ENCODE measurements at regions of chr1 and their contacts with region 1.

Region 1: GRCh38 chr1:161792740-161793139 is 26.6 kb downstream of the ATF6 start:
- DNase-seq: no peak
- H3K4me3 Mint-ChIP-seq: no peak overlapping the region
- H3K27ac Mint-ChIP-seq: peak overlapping the region; percentile 50
- H3K4me1 Mint-ChIP-seq: peaks cover 4% of the 10 kb centered on the region
- H3K27me3 Mint-ChIP-seq: no peaks in the 10 kb centered on the region

Region 2: GRCh38 chr1:161631076-161631475 is 161.7 kb before region 1 on chr1 and contains the start of gene FCGR3B:
- CTCF ChIA-PET with region 1: no interaction called
- DNase-seq: no peak
- H3K4me3 Mint-ChIP-seq: no peak within 1 kb of the TSS
- H3K27ac Mint-ChIP-seq: no peak within 1 kb of the TSS
- H3K4me1 Mint-ChIP-seq: peaks cover 10% of the 10 kb centered on the region
- H3K27me3 Mint-ChIP-seq: no peaks in the 10 kb centered on the region

Region 3: GRCh38 chr1:161772397-161772796 is 20.3 kb before region 1 on chr1:
- CTCF ChIA-PET with region 1: interaction called, 10 read pairs
- DNase-seq: no peak
- H3K4me3 Mint-ChIP-seq: no peak overlapping the region
- H3K27ac Mint-ChIP-seq: no peak overlapping the region
- H3K4me1 Mint-ChIP-seq: peaks cover 26% of the 10 kb centered on the region
- H3K27me3 Mint-ChIP-seq: no peaks in the 10 kb centered on the region

Region 4: DNA sequence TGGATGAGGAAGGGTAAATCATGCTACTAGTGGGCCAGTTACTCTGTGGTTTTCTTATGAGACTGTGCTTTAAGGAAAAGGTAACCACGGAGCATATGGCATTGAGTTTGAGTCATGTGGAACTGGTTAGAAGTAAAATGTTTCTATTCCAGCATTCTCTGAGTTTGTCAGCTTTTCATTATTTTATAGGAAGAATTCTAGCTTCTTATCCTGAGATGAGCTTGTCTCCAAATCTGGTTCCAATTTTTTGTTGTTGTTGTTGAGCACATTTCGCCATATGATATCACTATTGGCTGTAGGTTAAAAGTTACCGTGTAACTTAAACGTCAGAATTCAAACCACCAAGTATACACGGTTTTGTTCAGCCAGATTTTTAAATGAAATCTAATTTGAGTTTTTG is 43.3 kb after region 1 on chr1:
- CTCF ChIA-PET with region 1: no interaction called
- DNase-seq: no peak
- H3K4me3 Mint-ChIP-seq: no peak overlapping the region
- H3K27ac Mint-ChIP-seq: no peak overlapping the region
- H3K4me1 Mint-ChIP-seq: peaks cover 7% of the 10 kb centered on the region
- H3K27me3 Mint-ChIP-seq: no peaks in the 10 kb centered on the region

Region 5: GRCh38 chr1:161994175-161994668 is 201.5 kb after region 1 on chr1:
- CTCF ChIA-PET with region 1: interaction called, 11 read pairs
- DNase-seq: no peak
- H3K4me3 Mint-ChIP-seq: no peak overlapping the region
- H3K27ac Mint-ChIP-seq: no peak overlapping the region
- H3K4me1 Mint-ChIP-seq: no peaks in the 10 kb centered on the region
- H3K27me3 Mint-ChIP-seq: no peaks in the 10 kb centered on the region

Region 6: GRCh38 chr1:162035241-162035640 is 242.5 kb after region 1 on chr1:
- CTCF ChIA-PET with region 1: interaction called, 158 read pairs
- DNase-seq: no peak
- H3K4me3 Mint-ChIP-seq: no peak overlapping the region
- H3K27ac Mint-ChIP-seq: no peak overlapping the region
- H3K4me1 Mint-ChIP-seq: peaks cover 3% of the 10 kb centered on the region
- H3K27me3 Mint-ChIP-seq: peaks cover 23% of the 10 kb centered on the region